Heart right ventricle (tissue), 16 donors: ENCODE measurements at regions of chrX and their contacts with region 1.

Region 1: DNA sequence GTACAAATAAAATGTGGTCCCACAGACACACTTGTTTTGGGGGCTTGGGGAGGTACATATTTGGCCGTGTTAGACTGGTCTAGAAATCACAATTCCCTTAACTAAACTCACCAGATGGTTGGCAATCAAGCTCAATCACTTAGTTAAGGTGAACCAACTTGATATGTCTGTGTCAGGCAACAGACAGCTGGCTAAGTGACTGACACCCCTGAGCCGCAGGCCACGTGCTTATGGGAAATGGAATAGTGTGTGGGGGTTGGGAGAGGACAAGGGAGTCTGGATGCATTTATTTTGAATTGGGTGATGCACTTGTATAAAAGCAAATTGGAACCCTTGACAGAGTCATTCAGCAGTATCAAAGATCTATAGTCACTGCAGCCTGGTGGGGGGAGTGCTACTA is 209.0 kb downstream of the HS6ST2 start:
- DNase-seq: no peak
- ATAC-seq: no peak
- H3K4me3 ChIP-seq: no peak overlapping the region
- H3K27ac ChIP-seq: no peak overlapping the region
- H3K4me1 ChIP-seq: peaks cover 0 to 4% (median 0%) of the 10 kb centered on the region in 9 donors
- H3K27me3 ChIP-seq: peaks cover 0 to 32% (median 0%) of the 10 kb centered on the region in 7 donors
- CTCF ChIP-seq: no peak

Region 2: DNA sequence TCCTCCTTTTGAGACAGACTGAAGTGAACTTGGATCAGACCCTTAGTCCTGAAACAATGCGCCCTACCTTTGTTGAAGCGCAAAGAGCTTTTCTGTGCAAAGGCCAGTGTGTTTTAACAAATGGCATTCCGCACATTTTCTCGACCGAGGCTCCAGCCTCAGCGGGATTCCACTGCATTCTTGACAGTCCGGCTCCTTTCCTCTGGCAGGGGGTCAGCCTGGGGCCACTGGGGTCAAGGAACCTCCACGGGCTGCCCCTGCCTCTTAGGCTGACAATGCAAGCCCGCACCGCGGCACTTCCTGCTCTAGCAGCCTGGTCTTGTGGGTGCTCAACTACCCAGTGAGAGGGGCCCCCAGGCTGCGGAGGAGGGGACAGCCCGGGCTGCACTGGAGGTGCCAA is 515.9 kb after region 1 on chrX:
- intact Hi-C with region 1: loop called in 1 of 10 experiments (anchors 5 kb)
- DNase-seq: no peak
- ATAC-seq: no peak
- H3K4me3 ChIP-seq: no peak overlapping the region
- H3K27ac ChIP-seq: no peak overlapping the region
- H3K4me1 ChIP-seq: no peaks in the 10 kb centered on the region
- H3K27me3 ChIP-seq: peaks cover 0 to 13% (median 0%) of the 10 kb centered on the region in 7 donors
- CTCF ChIP-seq: no peak